B cell (primary cell): ENCODE measurements at regions of chr17 and their contacts with region 1.

Region 1: DNA sequence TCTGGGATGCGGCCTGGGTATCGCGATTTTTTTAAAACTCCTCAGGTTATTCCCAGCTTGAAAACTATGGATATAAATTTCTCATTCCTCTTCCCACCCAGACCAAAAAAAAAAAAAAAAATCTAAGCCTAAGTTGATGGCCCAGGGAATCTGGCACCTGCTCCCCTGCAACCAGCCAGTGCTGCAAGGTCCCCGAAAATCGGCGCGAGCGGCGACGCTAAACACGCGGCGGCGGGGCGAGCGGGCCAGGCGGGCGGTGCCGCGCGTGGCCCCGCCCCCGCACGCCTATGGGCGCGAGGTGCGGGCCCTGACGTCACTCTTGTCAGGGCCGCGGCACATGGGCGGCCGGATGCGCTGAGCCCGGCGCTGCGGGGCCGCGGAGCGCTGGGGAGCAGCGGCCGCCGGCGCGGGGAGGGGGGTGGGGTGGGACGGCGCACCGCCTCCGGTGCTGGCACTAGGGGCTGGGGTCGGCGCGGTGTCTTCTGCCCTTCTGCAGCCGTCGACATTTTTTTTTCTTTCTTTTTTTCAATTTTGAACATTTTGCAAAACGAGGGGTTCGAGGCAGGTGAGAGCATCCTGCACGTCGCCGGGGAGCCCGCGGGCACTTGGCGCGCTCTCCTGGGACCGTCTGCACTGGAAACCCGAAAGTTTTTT is at the start of gene HLF:
- DNase-seq: peak; percentile 81
- ATAC-seq: peak; percentile 93
- H3K4me3 ChIP-seq: peak within 1 kb of the TSS in 3 of 5 experiments; percentile 23 to 47 (median 38)
- H3K4me3 Mint-ChIP-seq: peak within 1 kb of the TSS; percentile 82
- H3K27ac ChIP-seq: no peak within 1 kb of the TSS
- H3K27ac Mint-ChIP-seq: no peak within 1 kb of the TSS
- H3K4me1 ChIP-seq: peaks cover 27 to 29% of the 10 kb centered on the region in 2 donors
- H3K4me1 Mint-ChIP-seq: peaks cover 25% of the 10 kb centered on the region
- H3K27me3 ChIP-seq: peaks cover 2 to 71% (median 54%) of the 10 kb centered on the region in 4 experiments
- H3K27me3 Mint-ChIP-seq: peaks cover 77% of the 10 kb centered on the region
- CTCF ChIP-seq: no peak
- total RNA-seq, gene HLF: not detected in 2 replicates

Region 2: GRCh38 chr17:54968262-54968987 is 296.3 kb before region 1 on chr17 and contains the starts of genes COX11 and STXBP4:
- CTCF ChIA-PET with region 1: no interaction called
- POLR2A ChIA-PET with region 1: no interaction called
- intact Hi-C with region 1: loop called (anchors 10 kb)
- DNase-seq: peak; percentile 98
- ATAC-seq: peak; percentile 96
- H3K4me3 ChIP-seq: peak within 1 kb of the TSS; percentile 69 to 96 (median 91)
- H3K4me3 Mint-ChIP-seq: no peak within 1 kb of the TSS
- H3K27ac ChIP-seq: peak within 1 kb of the TSS; percentile 47 to 80
- H3K27ac Mint-ChIP-seq: no peak within 1 kb of the TSS
- H3K4me1 ChIP-seq: peaks cover 8 to 21% of the 10 kb centered on the region in 2 donors
- H3K4me1 Mint-ChIP-seq: peaks cover 26% of the 10 kb centered on the region
- H3K27me3 ChIP-seq: no peaks in the 10 kb centered on the region
- H3K27me3 Mint-ChIP-seq: no peaks in the 10 kb centered on the region
- CTCF ChIP-seq: peak; percentile 12
- total RNA-seq, gene COX11: 54.9 and 63.7 TPM in 2 replicates
- total RNA-seq, gene STXBP4: 11.4 and 12.3 TPM in 2 replicates

Region 3: GRCh38 chr17:55238179-55238930 is 26.4 kb before region 1 on chr17:
- CTCF ChIA-PET with region 1: no interaction called
- POLR2A ChIA-PET with region 1: no interaction called
- intact Hi-C with region 1: loop called (anchors 1 kb)
- DNase-seq: peak; percentile 78
- ATAC-seq: peak; percentile 89
- H3K4me3 ChIP-seq: peak overlapping the region; percentile 11 to 69 (median 42)
- H3K4me3 Mint-ChIP-seq: peak overlapping the region; percentile 83
- H3K27ac ChIP-seq: no peak overlapping the region
- H3K27ac Mint-ChIP-seq: no peak overlapping the region
- H3K4me1 ChIP-seq: peaks cover 23 to 24% of the 10 kb centered on the region in 2 donors
- H3K4me1 Mint-ChIP-seq: peaks cover 26% of the 10 kb centered on the region
- H3K27me3 ChIP-seq: peaks cover 0 to 39% (median 35%) of the 10 kb centered on the region in 4 experiments
- H3K27me3 Mint-ChIP-seq: peaks cover 29% of the 10 kb centered on the region
- CTCF ChIP-seq: no peak

Region 4: DNA sequence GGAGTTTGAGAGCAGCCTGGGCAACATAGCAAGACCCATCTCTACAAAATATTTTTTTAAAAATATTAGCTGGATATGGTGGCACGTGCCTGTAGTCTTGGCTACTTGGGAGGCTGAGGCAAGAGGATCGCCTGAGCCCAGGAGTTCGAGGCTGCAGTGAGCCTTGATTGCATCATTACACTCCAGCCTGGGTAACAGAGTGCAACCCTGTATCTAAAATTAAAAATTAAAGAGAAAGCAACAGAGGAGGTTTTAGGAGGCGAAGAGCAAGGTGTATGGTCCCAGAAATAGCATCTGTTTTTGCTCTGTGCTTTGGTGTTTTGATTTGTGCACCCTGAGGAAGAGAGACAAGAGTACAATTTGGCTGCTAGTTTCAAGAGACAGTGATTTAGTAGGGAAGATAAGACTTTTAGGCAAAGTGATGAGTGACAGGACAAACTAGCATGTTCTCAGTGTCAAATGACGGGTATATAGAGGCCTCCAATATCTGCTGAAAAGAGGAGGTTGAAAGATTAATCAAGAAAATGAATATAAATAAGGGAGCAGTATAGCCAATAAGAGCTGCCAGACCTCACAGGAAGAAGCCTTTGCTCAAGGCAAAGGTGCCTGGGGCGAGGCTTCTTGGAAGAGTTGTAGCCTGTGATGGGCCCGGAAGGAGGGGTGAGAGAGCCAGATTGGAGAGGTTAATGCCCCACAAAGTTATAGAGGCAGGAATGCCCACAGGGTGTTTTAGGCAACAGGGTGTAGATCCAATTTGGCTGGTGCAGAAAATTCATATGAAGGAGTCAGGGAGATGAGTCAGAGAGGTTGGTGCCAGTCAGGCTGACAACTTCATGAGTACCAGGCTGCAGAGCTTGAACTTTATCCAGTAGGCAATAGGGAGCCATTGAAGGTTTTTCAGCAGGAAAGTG is 11.4 kb after region 1 on chr17:
- CTCF ChIA-PET with region 1: no interaction called
- POLR2A ChIA-PET with region 1: no interaction called
- intact Hi-C with region 1: no loop called
- DNase-seq: no peak
- ATAC-seq: no peak
- H3K4me3 ChIP-seq: no peak overlapping the region
- H3K4me3 Mint-ChIP-seq: no peak overlapping the region
- H3K27ac ChIP-seq: no peak overlapping the region
- H3K27ac Mint-ChIP-seq: no peak overlapping the region
- H3K4me1 ChIP-seq: no peaks in the 10 kb centered on the region
- H3K4me1 Mint-ChIP-seq: no peaks in the 10 kb centered on the region
- H3K27me3 ChIP-seq: peaks cover 0 to 23% (median 11%) of the 10 kb centered on the region in 4 experiments
- H3K27me3 Mint-ChIP-seq: peaks cover 59% of the 10 kb centered on the region
- CTCF ChIP-seq: no peak

Region 5: DNA sequence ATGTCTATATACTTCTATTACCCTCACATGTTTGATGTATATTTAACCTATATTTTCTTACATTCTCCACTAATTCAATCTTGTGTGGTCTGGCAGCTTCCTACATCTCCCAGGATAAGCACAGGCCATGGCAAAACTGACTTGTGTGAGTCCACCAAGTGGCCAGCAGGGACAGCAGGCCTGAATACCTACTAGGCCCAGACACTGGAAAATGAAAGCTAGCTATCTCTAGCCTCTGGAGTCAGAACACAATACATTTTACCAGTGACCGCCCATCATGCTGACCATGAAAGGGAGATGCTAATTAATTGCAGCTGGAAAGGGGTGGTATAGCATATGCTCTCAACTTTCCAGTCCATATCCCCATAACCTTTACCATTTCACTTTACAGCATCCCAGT is 618.4 kb after region 1 on chr17:
- CTCF ChIA-PET with region 1: no interaction called
- POLR2A ChIA-PET with region 1: no interaction called
- intact Hi-C with region 1: no loop called
- DNase-seq: no peak
- ATAC-seq: no peak
- H3K4me3 ChIP-seq: no peak overlapping the region
- H3K4me3 Mint-ChIP-seq: no peak overlapping the region
- H3K27ac ChIP-seq: no peak overlapping the region
- H3K27ac Mint-ChIP-seq: no peak overlapping the region
- H3K4me1 ChIP-seq: no peaks in the 10 kb centered on the region
- H3K4me1 Mint-ChIP-seq: no peaks in the 10 kb centered on the region
- H3K27me3 ChIP-seq: no peaks in the 10 kb centered on the region
- H3K27me3 Mint-ChIP-seq: peaks cover 5% of the 10 kb centered on the region
- CTCF ChIP-seq: no peak